Activated naive CD4-positive, alpha-beta T cell treated with anti-CD3 and anti-CD28 coated beads for 36 hours (primary cell): ENCODE measurements at regions of chr18 and their contacts with region 1.

Region 1: GRCh38 chr18:49399003-49399402 is 61.4 kb downstream of the DYM start:
- DNase-seq: peak; percentile 24
- H3K4me3 Mint-ChIP-seq: no peak overlapping the region
- H3K27ac Mint-ChIP-seq: no peak overlapping the region
- H3K4me1 Mint-ChIP-seq: peaks cover 47% of the 10 kb centered on the region
- H3K27me3 Mint-ChIP-seq: no peaks in the 10 kb centered on the region

Region 2: GRCh38 chr18:49359732-49360444 is 39.1 kb before region 1 on chr18:
- CTCF ChIA-PET with region 1: no interaction called
- intact Hi-C with region 1: loop called (anchors 5 kb)
- DNase-seq: no peak
- H3K4me3 Mint-ChIP-seq: no peak overlapping the region
- H3K27ac Mint-ChIP-seq: no peak overlapping the region
- H3K4me1 Mint-ChIP-seq: peaks cover 24% of the 10 kb centered on the region
- H3K27me3 Mint-ChIP-seq: no peaks in the 10 kb centered on the region

Region 3: DNA sequence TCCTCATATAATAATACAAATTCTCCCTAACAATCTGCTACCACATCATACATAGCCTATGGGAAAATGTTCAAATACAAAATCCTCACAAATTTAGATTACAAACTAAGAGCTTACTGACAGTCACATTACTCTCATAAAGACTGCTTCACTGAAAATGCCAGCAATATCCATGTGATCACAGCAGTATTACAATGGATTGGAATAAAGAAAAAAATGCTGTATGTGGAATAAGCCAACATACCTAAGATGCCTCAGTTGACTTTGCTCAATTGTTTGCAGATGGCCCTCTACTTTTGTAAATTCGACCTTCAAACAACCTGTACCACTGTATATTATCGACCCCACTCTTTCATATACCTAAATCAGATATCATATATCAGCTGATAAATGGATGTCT is 27.2 kb before region 1 on chr18:
- CTCF ChIA-PET with region 1: no interaction called
- intact Hi-C with region 1: no loop called
- DNase-seq: no peak
- H3K4me3 Mint-ChIP-seq: no peak overlapping the region
- H3K27ac Mint-ChIP-seq: no peak overlapping the region
- H3K4me1 Mint-ChIP-seq: no peaks in the 10 kb centered on the region
- H3K27me3 Mint-ChIP-seq: no peaks in the 10 kb centered on the region